ENCODE measurements at regions of chr18 and their contacts with region 1.

Region 1: DNA sequence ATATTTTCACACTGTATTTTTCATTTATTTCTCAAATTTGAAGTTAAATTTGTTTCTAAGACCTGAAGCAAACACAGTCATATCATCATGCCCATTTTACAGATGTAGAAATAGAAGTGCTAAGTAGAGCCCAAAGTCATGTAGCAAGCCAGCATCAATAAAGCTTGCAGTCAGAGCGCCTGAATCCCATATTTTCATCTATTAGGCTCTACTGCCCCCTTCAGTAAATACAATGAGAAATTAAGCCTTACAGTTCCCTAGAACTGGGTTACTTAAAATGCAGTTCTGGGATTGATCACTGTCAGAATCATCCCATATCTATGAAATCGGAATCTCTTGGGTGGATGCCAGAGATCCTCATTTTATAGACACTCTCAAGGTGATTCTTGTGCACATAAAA is 419.9 kb downstream of the TGIF1 start:
- DNase-seq: no peak

Region 2: DNA sequence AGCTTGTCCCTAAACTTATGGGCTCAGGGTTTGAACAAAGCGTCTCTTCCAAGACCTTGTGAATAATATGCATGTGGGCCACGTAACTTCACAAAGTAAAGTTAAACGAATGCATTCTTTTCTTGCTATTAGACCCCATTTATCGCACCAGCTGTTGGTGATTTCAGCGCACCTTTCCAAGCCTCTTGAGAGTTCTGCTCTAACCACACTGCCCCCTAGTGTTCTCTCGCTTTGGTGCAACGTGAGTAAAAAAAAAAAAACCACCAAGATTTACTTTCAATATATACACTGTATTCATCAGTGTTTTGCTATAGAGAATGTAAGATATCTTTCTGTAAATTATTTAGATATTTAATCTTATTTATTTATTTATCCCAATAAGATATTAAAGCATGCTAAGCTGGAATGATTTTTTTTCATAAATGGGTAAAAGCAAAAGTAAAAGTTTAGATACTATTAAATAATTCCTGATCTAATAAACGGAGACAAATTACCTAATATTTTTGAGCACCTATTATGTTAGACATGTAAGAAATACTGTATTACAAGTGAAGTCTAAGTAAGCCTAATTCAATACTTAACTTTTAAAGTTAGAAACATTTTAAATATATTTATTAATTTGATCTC is 125.7 kb after region 1 on chr18:
- intact Hi-C with region 1: loop called (anchors 10 kb)
- DNase-seq: peak in 38 of 42 donors; percentile 17 to 82 (median 56)